ENCODE measurements at regions of chr9 and their contacts with region 1.

Region 1: GRCh38 chr9:112809351-112809848 is 58.8 kb downstream of the SNX30 start:
- DNase-seq: peak; percentile 74
- ATAC-seq: peak; percentile 90
- H3K4me3 ChIP-seq: peak overlapping the region in 3 of 5 experiments; percentile 10 to 45 (median 15)
- H3K4me3 Mint-ChIP-seq: no peak overlapping the region
- H3K27ac ChIP-seq: no peak overlapping the region
- H3K27ac Mint-ChIP-seq: no peak overlapping the region
- H3K4me1 ChIP-seq: peaks cover 39% of the 10 kb centered on the region in 2 donors
- H3K4me1 Mint-ChIP-seq: peaks cover 19% of the 10 kb centered on the region
- H3K27me3 ChIP-seq: peaks cover 0 to 9% (median 8%) of the 10 kb centered on the region in 4 experiments
- H3K27me3 Mint-ChIP-seq: peaks cover 20% of the 10 kb centered on the region
- CTCF ChIP-seq: no peak

Region 2: GRCh38 chr9:112486221-112487007 is 323.0 kb before region 1 on chr9 and contains the start of gene KIAA1958:
- CTCF ChIA-PET with region 1: no interaction called
- POLR2A ChIA-PET with region 1: no interaction called
- intact Hi-C with region 1: loop called (anchors 5 kb)
- DNase-seq: peak; percentile 88
- ATAC-seq: peak; percentile 87
- H3K4me3 ChIP-seq: peak within 1 kb of the TSS; percentile 71 to 85 (median 77)
- H3K4me3 Mint-ChIP-seq: peak within 1 kb of the TSS; percentile 100
- H3K27ac ChIP-seq: peak within 1 kb of the TSS; percentile 58 to 69
- H3K27ac Mint-ChIP-seq: peak within 1 kb of the TSS; percentile 96
- H3K4me1 ChIP-seq: peaks cover 5 to 13% of the 10 kb centered on the region in 2 donors
- H3K4me1 Mint-ChIP-seq: peaks cover 22% of the 10 kb centered on the region
- H3K27me3 ChIP-seq: no peaks in the 10 kb centered on the region
- H3K27me3 Mint-ChIP-seq: no peaks in the 10 kb centered on the region
- CTCF ChIP-seq: no peak
- total RNA-seq, gene KIAA1958: 15.3 and 17.2 TPM in 2 replicates

Region 3: DNA sequence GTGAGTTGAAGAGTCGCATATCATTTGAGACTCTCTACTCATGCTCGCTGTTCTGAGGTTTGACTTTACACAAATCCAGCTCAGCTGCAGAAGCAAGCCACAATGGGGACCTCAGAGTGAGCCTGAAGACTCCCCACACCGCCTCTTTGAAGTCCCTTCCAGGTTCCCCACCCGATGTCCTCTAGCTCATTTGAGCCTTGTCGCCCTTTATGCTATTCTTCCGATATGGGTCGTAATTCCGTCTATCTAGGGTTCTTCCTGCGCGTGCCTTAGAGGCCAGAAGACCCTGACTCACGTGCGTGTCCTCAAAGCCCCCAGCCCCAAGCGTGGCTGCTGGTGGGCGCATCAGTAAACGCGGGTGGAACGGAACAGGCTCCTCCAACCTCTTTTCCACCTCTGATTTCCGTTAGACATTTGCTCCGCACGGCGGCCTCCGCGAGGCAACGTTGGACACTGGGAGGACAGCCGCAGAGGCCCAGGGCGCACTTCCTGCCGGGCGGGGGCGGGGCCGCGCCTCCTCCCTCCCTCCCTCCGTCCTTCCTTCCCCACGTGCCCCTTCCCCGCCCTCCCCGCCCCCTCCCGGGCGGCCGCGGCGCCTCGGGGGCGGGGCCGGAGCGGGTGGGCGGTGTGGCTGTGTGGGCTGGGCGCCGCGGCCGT is 59.2 kb before region 1 on chr9 and contains the start of gene SNX30:
- CTCF ChIA-PET with region 1: interaction called, 6 read pairs
- POLR2A ChIA-PET with region 1: no interaction called
- intact Hi-C with region 1: loop called (anchors 5 kb)
- DNase-seq: peak; percentile 88
- ATAC-seq: peak; percentile 94
- H3K4me3 ChIP-seq: peak within 1 kb of the TSS; percentile 67 to 90 (median 83)
- H3K4me3 Mint-ChIP-seq: peak within 1 kb of the TSS; percentile 91
- H3K27ac ChIP-seq: peak within 1 kb of the TSS; percentile 55 to 69
- H3K27ac Mint-ChIP-seq: peak within 1 kb of the TSS; percentile 92
- H3K4me1 ChIP-seq: peaks cover 24 to 44% of the 10 kb centered on the region in 2 donors
- H3K4me1 Mint-ChIP-seq: peaks cover 45% of the 10 kb centered on the region
- H3K27me3 ChIP-seq: no peaks in the 10 kb centered on the region
- H3K27me3 Mint-ChIP-seq: no peaks in the 10 kb centered on the region
- CTCF ChIP-seq: no peak
- total RNA-seq, gene SNX30: 18.8 and 20.6 TPM in 2 replicates

Region 4: DNA sequence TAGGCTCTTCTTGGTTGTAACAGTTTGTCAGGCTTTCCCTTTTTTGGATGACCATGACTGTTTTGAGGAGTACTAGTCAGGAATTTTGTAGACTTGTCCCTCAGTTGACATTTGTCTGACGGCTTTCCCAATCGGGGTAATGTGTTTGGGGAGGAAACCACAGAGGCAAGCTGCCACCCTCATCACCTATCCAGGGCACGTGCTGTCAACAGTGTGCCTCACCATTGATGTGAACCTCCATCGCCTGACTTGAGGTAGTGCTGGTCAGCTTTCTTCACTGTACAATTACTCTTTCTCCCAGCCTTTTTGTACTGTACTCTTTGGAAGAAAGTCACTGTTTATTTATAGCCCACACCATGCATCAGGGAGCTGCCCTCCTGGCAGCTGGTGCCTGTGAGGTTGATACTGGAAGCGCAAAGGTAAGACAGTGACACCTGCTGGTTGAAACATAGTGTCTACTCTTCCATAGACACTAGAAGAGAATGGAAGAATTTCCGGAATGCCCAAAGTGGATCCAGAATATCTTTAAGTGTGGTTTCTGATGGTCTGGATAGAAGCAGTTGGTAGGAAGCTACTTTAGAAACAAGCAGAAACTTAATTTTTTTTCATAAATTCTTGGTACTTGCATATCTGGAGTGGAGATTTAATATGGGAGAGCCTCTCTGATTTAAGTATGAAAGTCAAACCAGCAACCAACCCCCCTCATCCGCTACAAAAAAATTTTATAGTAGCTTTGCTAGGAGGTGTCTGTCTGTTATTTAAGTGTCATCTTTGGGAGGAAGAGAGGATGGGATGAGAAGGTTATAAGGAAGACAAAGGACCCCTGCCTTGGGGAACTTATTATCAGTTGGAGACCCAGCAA is 10.5 kb after region 1 on chr9:
- CTCF ChIA-PET with region 1: interaction called, 5 read pairs
- POLR2A ChIA-PET with region 1: no interaction called
- intact Hi-C with region 1: loop called (anchors 1 kb)
- DNase-seq: peak; percentile 63
- ATAC-seq: peak; percentile 70
- H3K4me3 ChIP-seq: no peak overlapping the region
- H3K4me3 Mint-ChIP-seq: peak overlapping the region; percentile 8
- H3K27ac ChIP-seq: no peak overlapping the region
- H3K27ac Mint-ChIP-seq: no peak overlapping the region
- H3K4me1 ChIP-seq: peaks cover 10 to 15% of the 10 kb centered on the region in 2 donors
- H3K4me1 Mint-ChIP-seq: peaks cover 17% of the 10 kb centered on the region
- H3K27me3 ChIP-seq: no peaks in the 10 kb centered on the region
- H3K27me3 Mint-ChIP-seq: peaks cover 6% of the 10 kb centered on the region
- CTCF ChIP-seq: peak; percentile 68

Region 5: GRCh38 chr9:112846528-112847488 is 37.4 kb after region 1 on chr9:
- CTCF ChIA-PET with region 1: no interaction called
- POLR2A ChIA-PET with region 1: no interaction called
- intact Hi-C with region 1: no loop called
- DNase-seq: no peak
- ATAC-seq: no peak
- H3K4me3 ChIP-seq: no peak overlapping the region
- H3K4me3 Mint-ChIP-seq: no peak overlapping the region
- H3K27ac ChIP-seq: no peak overlapping the region
- H3K27ac Mint-ChIP-seq: no peak overlapping the region
- H3K4me1 ChIP-seq: peaks cover 7 to 8% of the 10 kb centered on the region in 2 donors
- H3K4me1 Mint-ChIP-seq: peaks cover 14% of the 10 kb centered on the region
- H3K27me3 ChIP-seq: no peaks in the 10 kb centered on the region
- H3K27me3 Mint-ChIP-seq: no peaks in the 10 kb centered on the region
- CTCF ChIP-seq: no peak

Region 6: DNA sequence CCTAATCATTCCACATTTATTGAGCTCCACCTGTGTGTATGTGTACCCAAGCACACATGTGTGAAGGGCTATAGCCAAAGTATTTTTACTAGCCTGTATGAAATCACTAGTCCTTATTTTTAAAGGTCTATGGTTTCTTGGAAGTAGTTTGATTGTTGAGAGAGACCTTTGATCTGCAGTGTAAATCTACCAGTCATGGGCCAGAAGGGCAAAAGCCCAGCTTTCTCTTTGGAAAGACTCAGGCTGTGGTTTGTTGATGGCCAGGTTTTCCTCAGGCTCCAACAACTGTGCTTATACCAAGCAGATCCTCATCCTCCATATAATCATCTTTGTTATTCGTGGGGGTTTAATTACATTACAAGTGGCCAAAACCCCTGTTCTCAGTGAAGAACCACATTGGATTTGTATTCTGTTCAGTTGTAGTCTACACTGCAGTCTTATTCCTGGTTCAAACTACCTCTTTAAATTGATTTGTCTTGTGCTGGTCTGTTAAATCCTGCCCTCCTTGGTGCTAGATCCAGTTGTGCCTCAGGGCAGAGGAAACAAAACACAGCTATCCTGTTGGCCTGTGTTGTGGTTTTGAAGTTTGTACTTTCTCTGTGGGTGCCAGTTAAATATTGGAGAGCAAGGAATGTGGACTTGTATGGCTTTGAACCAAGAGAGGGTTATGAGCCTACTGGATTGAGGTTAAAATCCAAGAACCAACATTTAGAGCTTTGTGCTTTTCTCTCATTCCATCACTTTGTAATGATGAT is 452.7 kb after region 1 on chr9:
- CTCF ChIA-PET with region 1: no interaction called
- POLR2A ChIA-PET with region 1: no interaction called
- intact Hi-C with region 1: no loop called
- DNase-seq: no peak
- ATAC-seq: no peak
- H3K4me3 ChIP-seq: no peak overlapping the region
- H3K4me3 Mint-ChIP-seq: no peak overlapping the region
- H3K27ac ChIP-seq: no peak overlapping the region
- H3K27ac Mint-ChIP-seq: no peak overlapping the region
- H3K4me1 ChIP-seq: no peaks in the 10 kb centered on the region
- H3K4me1 Mint-ChIP-seq: no peaks in the 10 kb centered on the region
- H3K27me3 ChIP-seq: no peaks in the 10 kb centered on the region
- H3K27me3 Mint-ChIP-seq: no peaks in the 10 kb centered on the region
- CTCF ChIP-seq: no peak

Region 7: DNA sequence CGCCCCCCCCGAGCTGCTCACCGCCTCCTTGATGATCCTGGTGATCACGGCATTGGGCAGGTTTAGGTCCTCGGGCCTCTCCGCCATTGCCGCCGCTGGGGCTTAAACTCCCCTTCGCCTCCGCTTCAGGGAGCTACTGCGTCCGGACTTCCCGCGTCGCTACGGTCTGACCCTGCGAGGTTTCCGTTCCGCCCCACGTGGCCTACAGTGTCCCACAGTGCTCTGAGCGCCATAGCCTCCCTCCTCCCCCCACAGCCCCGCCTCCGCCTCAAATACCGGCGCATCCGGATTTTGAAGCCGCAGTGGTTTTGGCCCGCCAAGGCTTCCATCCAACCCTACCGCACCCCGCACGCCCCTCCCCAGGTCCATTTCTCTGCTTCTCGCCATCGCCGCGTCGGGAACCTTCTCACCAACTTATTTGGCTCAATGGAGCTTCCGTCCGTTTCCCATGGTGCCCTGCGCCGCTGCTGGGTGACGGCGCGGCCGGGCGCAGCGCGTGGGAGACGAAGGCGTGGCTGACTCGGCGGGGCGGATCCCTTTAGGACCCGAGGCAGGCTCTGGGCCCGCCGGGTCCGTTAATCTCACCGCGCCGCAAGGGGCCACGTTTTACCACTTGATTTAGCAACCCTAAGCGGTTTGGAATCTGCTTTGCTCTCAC is 600.9 kb after region 1 on chr9 and contains the starts of genes C9orf43 and POLE3:
- CTCF ChIA-PET with region 1: no interaction called
- POLR2A ChIA-PET with region 1: no interaction called
- intact Hi-C with region 1: no loop called
- DNase-seq: peak; percentile 98
- ATAC-seq: peak; percentile 89
- H3K4me3 ChIP-seq: peak within 1 kb of the TSS; percentile 74 to 100 (median 97)
- H3K4me3 Mint-ChIP-seq: peak within 1 kb of the TSS; percentile 100
- H3K27ac ChIP-seq: peak within 1 kb of the TSS; percentile 92 to 97
- H3K27ac Mint-ChIP-seq: peak within 1 kb of the TSS; percentile 100
- H3K4me1 ChIP-seq: peaks cover 8 to 17% of the 10 kb centered on the region in 2 donors
- H3K4me1 Mint-ChIP-seq: peaks cover 32% of the 10 kb centered on the region
- H3K27me3 ChIP-seq: no peaks in the 10 kb centered on the region
- H3K27me3 Mint-ChIP-seq: no peaks in the 10 kb centered on the region
- CTCF ChIP-seq: peak; percentile 14
- total RNA-seq, gene C9orf43: 0.58 and 1.7 TPM in 2 replicates
- total RNA-seq, gene POLE3: 46.1 and 50.3 TPM in 2 replicates